Activated naive CD4-positive, alpha-beta T cell treated with anti-CD3 and anti-CD28 coated beads, Interleukin-2, amount 10 ng/mL, durations not matched to agents 7 days and 5 days (primary cell): ENCODE measurements at regions of chr5 and their contacts with region 1.

Region 1: DNA sequence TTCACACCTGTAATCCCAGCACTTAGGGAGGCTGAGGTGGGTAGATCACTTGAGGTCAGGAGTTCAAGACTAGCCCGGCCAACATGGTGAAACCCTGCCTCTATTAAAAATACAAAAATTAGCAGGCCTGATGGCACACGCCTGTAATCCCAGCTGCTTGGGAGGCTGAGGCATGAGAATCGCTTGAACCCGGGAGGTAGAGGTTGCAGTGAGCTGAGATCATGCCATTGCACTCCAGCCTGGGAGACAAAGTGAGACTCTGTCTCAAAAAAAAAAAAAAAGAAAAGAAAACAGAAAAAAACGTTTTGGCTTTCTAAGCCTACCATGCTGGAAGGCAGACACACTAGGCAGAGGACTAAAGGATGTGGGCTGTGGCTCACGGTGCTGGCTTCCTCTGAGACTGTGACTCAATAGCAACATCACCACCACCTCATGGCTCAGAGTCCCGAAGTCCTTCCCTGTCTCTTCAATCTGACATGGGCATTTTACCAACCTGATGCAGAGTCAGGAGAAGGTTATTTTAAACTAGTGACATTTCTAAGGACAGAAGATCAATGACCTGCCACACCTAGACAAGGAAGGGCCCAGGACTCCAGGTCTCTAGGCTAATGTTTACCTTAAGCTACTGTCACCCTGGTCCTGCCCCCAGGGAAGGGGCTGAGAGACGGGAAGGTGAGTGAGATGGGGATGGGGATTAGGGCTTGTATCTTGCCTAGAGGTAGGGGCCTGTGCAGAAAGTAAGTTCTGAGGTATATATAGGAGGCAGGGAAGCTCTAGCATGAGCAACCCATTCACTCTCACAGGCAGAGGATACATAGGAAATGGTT is 3.8 kb downstream of the ECSCR start:
- DNase-seq: peak; percentile 90
- H3K4me3 Mint-ChIP-seq: peak overlapping the region; percentile 48
- H3K27ac Mint-ChIP-seq: peak overlapping the region; percentile 91
- H3K4me1 Mint-ChIP-seq: peaks cover 74% of the 10 kb centered on the region
- H3K27me3 Mint-ChIP-seq: peaks cover 10% of the 10 kb centered on the region

Region 2: DNA sequence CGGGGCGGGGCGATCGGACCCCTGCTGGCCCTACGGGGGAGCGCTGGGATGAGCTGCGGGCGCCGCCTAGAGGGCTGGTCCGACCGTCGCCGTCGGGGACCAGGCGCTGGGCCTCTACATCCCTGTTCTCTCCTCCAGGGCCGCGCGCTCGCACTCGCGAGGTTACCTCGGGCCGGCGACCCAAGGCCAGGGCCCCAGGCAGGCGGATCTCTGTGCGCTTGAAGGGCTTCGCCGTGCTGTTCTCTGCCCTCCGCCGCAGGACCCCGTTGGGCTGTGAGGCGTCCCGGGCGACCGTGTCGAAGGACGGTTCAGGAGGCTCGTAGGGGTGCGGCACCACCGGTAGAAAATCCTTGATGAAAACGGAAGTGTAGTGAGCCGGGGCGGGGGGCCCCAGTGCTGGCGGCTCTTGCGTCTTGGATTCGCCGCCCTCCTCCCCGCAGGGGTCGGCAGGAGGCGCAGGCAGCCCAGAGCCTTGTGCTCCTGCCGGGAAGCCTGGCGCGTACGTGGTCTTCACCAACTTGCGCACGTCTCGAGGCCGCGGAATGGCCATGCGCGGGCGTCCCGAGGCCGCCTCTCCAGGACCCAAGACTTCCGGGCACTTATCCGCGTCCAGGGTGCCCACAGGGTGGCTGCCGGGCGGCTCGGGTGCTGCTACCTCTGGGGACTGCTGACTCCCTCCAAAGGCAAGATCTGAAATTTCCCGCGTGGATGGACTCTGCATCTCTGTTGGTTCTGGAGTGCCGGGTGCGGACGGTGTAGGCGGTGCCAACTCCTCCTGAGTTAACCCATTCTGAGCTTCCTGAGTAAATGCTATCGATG is 65.9 kb before region 1 on chr5:
- CTCF ChIA-PET with region 1: no interaction called
- DNase-seq: peak; percentile 88
- H3K4me3 Mint-ChIP-seq: peak overlapping the region; percentile 87
- H3K27ac Mint-ChIP-seq: peak overlapping the region; percentile 87
- H3K4me1 Mint-ChIP-seq: peaks cover 72% of the 10 kb centered on the region
- H3K27me3 Mint-ChIP-seq: peaks cover 30% of the 10 kb centered on the region

Region 3: GRCh38 chr5:139439013-139439903 is 19.5 kb before region 1 on chr5 and contains the start of gene DNAJC18:
- CTCF ChIA-PET with region 1: interaction called, 13 read pairs
- DNase-seq: peak; percentile 94
- H3K4me3 Mint-ChIP-seq: peak within 1 kb of the TSS; percentile 98
- H3K27ac Mint-ChIP-seq: peak within 1 kb of the TSS; percentile 99
- H3K4me1 Mint-ChIP-seq: peaks cover 60% of the 10 kb centered on the region
- H3K27me3 Mint-ChIP-seq: peaks cover 8% of the 10 kb centered on the region

Region 4: GRCh38 chr5:139473565-139473964 is 14.8 kb after region 1 on chr5:
- CTCF ChIA-PET with region 1: no interaction called
- DNase-seq: peak; percentile 4
- H3K4me3 Mint-ChIP-seq: no peak overlapping the region
- H3K27ac Mint-ChIP-seq: peak overlapping the region; percentile 73
- H3K4me1 Mint-ChIP-seq: peaks cover 98% of the 10 kb centered on the region
- H3K27me3 Mint-ChIP-seq: no peaks in the 10 kb centered on the region

Region 5: DNA sequence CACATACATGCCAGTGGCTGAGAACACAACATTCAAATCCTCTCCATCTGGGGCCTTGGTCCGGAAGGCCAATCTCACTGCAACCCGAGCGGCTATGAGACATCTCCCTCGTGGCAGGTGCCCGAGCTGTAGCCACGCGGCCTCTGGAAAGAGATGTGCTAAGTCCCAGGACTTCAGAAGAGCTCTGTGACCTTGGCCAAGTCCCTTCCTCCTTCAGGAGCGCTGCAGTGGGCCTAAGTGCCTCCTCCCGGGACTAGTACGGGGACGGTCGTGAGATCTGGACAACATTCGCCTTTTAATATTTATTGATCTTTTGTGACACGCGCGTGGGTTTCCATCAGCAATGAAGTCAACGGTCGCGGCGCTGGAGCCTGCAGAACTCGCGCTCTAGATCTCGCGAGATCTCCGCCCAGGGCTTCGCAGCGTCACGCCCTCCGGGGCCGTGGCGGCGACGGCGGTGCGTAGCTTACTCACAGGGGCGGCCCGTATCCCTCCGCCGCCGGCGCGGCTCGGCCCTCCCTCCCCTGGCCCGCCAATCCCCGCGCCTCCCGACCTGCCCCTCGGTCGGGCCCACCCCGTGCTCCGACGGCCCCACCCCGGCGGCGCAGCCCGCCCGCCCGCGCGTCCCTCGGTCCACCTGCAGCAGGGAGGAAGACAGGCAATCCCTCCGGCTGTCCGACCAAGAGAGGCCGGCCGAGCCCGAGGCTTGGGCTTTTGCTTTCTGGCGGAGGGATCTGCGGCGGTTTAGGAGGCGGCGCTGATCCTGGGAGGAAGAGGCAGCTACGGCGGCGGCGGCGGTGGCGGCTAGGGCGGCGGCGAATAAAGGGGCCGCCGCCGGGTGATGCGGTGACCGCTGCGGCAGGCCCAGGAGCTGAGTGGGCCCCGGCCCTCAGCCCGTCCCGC is 102.2 kb after region 1 on chr5 and contains the start of gene UBE2D2:
- CTCF ChIA-PET with region 1: no interaction called
- DNase-seq: peak; percentile 98
- H3K4me3 Mint-ChIP-seq: peak within 1 kb of the TSS; percentile 98
- H3K27ac Mint-ChIP-seq: peak within 1 kb of the TSS; percentile 99
- H3K4me1 Mint-ChIP-seq: peaks cover 36% of the 10 kb centered on the region
- H3K27me3 Mint-ChIP-seq: no peaks in the 10 kb centered on the region